Activated CD4-positive, alpha-beta T cell treated with anti-CD3 and anti-CD28 coated beads, Interleukin-2, amount 10 ng/mL, durations not matched to agents 24 days and 14 days (primary cell): ENCODE measurements at regions of chr7 and their contacts with region 1.

Region 1: DNA sequence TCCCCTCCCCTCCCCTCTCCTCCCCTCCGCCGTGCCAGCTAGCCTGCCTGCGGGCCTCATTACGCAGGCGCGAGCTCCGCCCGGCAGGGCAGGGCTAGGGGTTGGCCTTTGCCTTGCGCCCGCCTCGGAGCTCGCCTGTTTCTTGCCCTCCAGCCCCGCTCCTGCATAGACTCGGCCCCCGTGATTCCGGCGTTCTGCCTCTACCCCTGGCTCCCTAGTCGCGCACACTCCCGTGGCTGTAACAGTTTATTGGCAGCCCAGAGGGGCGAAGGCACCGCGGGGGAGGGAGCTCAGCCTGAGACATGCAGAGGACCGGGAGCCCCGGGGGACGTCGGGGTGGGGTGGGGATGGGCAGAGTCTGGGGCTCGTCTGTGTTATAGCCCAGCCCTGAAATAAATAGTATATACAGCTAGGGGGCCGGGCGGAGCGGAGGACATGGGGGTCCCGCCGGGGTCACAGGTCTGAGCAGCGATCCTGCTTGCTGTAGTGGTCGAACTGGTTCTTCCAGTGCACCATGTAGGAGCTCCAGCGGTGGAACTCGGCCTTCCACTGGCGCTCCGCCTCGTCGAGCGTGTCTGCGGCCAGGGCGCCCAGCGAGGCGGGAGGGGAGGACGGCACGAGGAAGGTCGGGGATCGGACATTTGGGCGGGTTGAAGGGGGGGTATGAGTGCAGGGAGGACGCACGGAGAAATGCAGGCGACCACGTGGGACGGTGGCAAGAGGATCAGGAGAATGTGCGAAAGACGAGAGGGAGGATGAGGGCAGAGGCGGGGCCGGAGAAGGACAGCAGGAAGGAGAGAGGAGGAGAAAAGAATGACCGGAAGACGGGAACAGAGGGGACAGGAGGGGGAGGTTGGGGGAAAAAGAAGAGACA is 483 bp upstream of the UFSP1 start:
- DNase-seq: peak; percentile 98
- H3K4me3 Mint-ChIP-seq: peak overlapping the region; percentile 83
- H3K27ac Mint-ChIP-seq: peak overlapping the region; percentile 77
- H3K4me1 Mint-ChIP-seq: peaks cover 39% of the 10 kb centered on the region
- H3K27me3 Mint-ChIP-seq: peaks cover 32% of the 10 kb centered on the region

Region 2: GRCh38 chr7:100874577-100875355 is 15.2 kb before region 1 on chr7 and contains the start of gene SRRT:
- intact Hi-C with region 1: loop called (anchors 1 kb)
- DNase-seq: peak; percentile 100
- H3K4me3 Mint-ChIP-seq: peak within 1 kb of the TSS; percentile 98
- H3K27ac Mint-ChIP-seq: peak within 1 kb of the TSS; percentile 98
- H3K4me1 Mint-ChIP-seq: peaks cover 50% of the 10 kb centered on the region
- H3K27me3 Mint-ChIP-seq: no peaks in the 10 kb centered on the region
- total RNA-seq, gene SRRT: 300 and 318 TPM in 2 replicates